GM12878 (cell line): ENCODE measurements at regions of chr17 and their contacts with region 1.

Region 1: DNA sequence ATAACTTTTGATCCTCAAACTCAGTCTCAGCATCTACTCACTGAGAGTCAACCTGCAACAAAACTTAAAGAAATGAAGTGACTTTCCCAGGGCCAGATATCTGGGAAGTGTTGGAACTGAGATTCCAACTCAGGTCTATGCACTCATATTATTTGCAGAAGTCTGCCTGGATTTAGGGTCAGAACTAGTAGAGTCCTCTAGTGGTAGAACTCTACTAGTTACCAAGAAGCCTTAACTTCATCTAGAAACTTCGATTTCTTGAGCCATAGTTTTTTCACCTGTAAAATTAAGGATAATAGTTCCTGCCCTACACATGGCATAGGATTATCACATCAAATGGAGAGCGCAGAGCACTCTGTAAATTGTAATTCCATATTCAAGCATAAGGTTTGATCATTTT is 23.4 kb upstream of the KRT24 start:
- DNase-seq: no peak
- ATAC-seq: peak; percentile 49
- H3K4me3 ChIP-seq: no peak overlapping the region
- H3K27ac ChIP-seq: no peak overlapping the region
- H3K4me1 ChIP-seq: peaks cover 3% of the 10 kb centered on the region; the same call in 1 of the 2 replicates
- H3K27me3 ChIP-seq: no peaks in the 10 kb centered on the region; a peak in 1 of 4 replicates
- CTCF ChIP-seq: peak in 1 of 3 experiments; percentile 22; a peak in 2 of 6 replicates
- EP300 ChIP-seq: no peak
- POLR2A ChIP-seq: no peak
- RAD21 ChIP-seq: no peak

Region 2: DNA sequence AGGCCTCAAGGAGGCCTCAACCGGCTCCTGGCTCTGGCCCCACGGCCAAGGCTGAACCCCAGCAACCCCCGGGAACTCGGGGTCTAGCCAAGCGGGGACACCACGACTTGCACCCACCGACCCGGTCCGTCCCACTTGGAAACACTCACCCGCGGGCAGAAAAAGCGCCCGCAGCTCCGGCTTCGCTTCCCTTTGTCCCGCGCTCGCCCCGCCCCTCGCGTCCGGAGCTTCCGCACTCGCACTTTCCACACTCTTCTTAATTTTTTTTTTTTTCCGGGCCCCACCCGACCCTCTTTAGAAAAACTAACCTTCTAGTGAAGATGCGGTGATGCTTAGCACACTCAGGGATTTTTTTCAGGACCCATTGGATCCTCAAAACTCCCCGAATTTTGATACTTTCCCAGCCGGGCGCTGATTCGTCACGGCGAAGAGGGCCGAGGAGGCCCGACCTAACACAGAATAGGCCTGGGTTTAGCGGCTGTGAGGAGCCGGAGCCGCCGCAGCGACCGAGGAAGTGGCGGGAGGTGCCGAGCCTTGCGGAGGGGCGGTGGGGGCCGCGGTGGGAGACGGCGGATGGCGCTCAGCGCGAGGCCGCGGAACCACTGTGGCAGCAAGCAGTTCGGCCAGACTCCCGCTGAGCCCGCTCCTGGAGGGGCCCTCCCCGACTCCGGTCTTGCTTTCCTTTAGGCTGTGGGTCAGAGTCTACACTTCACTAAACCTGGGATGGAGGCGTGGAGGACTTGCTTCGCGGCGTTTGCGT is 79.1 kb before region 1 on chr17 and contains the start of gene SMARCE1:
- CTCF ChIA-PET with region 1: interaction called, 10 read pairs
- POLR2A ChIA-PET with region 1: no interaction called
- RAD21 ChIA-PET with region 1: interaction called, 8 read pairs
- SMC1A ChIA-PET with region 1: interaction called, 6 read pairs
- in situ Hi-C with region 1: no loop called
- intact Hi-C with region 1: loop called (anchors 5 kb)
- DNase-seq: no peak
- ATAC-seq: peak; percentile 85
- H3K4me3 ChIP-seq: peak within 1 kb of the TSS; percentile 89
- H3K27ac ChIP-seq: peak within 1 kb of the TSS; percentile 98
- H3K4me1 ChIP-seq: no peaks in the 10 kb centered on the region
- H3K27me3 ChIP-seq: no peaks in the 10 kb centered on the region
- CTCF ChIP-seq: no peak
- EP300 ChIP-seq: peak in 1 of 2 experiments; percentile 99; a peak in 2 of 4 replicates
- POLR2A ChIP-seq: peak; percentile 89
- RAD21 ChIP-seq: no peak
- polyA plus RNA-seq, gene SMARCE1: 124 to 145 TPM